ENCODE measurements at regions of chr9 and their contacts with region 1.

Region 1: DNA sequence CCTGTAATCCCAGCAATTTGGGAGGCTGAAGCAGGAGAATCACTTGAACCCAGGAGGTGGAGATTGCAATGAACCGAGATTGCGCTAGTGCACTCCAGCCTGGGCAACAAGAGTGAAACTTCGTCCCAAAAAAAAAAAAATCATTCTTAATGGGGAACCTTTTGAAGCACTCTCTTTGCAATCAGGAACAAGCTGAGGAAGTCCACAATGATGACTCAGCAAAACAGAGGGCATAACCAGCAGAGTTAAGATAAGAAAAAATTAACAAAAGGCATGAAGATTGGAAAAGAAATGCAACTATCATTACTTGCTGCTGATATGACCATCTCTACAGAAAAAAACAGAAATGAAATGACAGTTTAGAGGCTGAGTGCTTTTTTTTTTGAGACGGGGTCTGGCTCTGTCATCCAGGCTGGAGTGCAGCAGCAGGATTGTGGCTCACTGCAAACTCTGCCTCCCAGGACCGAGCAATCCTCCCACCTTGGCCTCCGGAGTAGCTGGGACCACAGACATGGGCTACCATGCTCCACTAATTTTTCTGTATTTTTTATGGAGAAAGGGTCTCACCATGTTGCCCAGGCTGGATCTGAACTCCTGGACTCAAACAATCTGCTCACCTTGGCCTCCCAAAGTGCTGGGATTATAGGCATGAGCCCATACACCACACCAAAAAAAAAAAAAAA is 88.0 kb downstream of the FNBP1 start:
- DNase-seq: no peak
- H3K4me3 ChIP-seq: no peak overlapping the region
- H3K4me3 Mint-ChIP-seq: peak overlapping the region in 7 of 8 donors; percentile 4 to 80 (median 36)
- H3K27ac ChIP-seq: no peak overlapping the region
- H3K27ac Mint-ChIP-seq: peak overlapping the region; percentile 34 to 87 (median 83)
- H3K4me1 ChIP-seq: peaks cover 33% of the 10 kb centered on the region
- H3K4me1 Mint-ChIP-seq: peaks cover 22 to 53% (median 33%) of the 10 kb centered on the region in 4 donors
- H3K27me3 ChIP-seq: no peaks in the 10 kb centered on the region
- H3K27me3 Mint-ChIP-seq: no peaks in the 10 kb centered on the region

Region 2: GRCh38 chr9:129802851-129803675 is 151.9 kb before region 1 on chr9 and contains the start of gene TOR1B:
- CTCF ChIA-PET with region 1: no interaction called
- POLR2A ChIA-PET with region 1: no interaction called
- intact Hi-C with region 1: no loop called
- DNase-seq: peak; percentile 93 to 96 (median 94)
- H3K4me3 ChIP-seq: peak within 1 kb of the TSS; percentile 77 to 78
- H3K4me3 Mint-ChIP-seq: peak within 1 kb of the TSS; percentile 91 to 96 (median 93)
- H3K27ac ChIP-seq: peak within 1 kb of the TSS; percentile 85
- H3K27ac Mint-ChIP-seq: peak within 1 kb of the TSS; percentile 88 to 97 (median 95)
- H3K4me1 ChIP-seq: peaks cover 27% of the 10 kb centered on the region
- H3K4me1 Mint-ChIP-seq: peaks cover 17 to 31% (median 23%) of the 10 kb centered on the region in 4 donors
- H3K27me3 ChIP-seq: no peaks in the 10 kb centered on the region
- H3K27me3 Mint-ChIP-seq: no peaks in the 10 kb centered on the region
- total RNA-seq, gene TOR1B: 29.5 to 33.0 TPM

Region 3: DNA sequence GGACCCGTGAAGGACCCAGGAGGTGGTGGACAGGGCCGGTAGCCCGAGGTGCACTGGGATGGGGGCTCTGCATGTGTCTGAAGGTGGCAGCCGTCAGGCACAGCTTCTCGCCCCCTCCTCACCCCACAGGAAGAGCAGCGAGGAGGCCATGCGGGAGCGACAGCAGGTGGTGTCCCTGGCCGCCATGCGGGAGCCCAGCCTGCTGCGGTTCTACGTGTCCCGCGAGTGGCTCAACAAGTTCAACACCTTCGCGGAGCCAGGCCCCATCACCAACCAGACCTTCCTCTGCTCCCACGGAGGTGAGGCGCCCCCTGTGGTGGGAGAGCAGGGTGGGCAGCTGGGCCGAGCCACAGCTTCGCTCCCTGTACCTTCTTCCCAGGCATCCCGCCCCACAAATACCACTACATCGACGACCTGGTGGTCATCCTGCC is 79.8 kb before region 1 on chr9:
- CTCF ChIA-PET with region 1: no interaction called
- POLR2A ChIA-PET with region 1: no interaction called
- intact Hi-C with region 1: no loop called
- DNase-seq: no peak
- H3K4me3 ChIP-seq: no peak overlapping the region
- H3K4me3 Mint-ChIP-seq: no peak overlapping the region
- H3K27ac ChIP-seq: peak overlapping the region; percentile 28
- H3K27ac Mint-ChIP-seq: peak overlapping the region in 1 of 7 donors; percentile 3
- H3K4me1 ChIP-seq: peaks cover 39% of the 10 kb centered on the region
- H3K4me1 Mint-ChIP-seq: peaks cover 15 to 61% (median 32%) of the 10 kb centered on the region in 4 donors
- H3K27me3 ChIP-seq: no peaks in the 10 kb centered on the region
- H3K27me3 Mint-ChIP-seq: no peaks in the 10 kb centered on the region

Region 4: GRCh38 chr9:129889941-129890717 is 64.9 kb before region 1 on chr9:
- CTCF ChIA-PET with region 1: interaction called, 4 read pairs
- POLR2A ChIA-PET with region 1: interaction called, 37 read pairs
- intact Hi-C with region 1: no loop called
- DNase-seq: peak; percentile 63 to 87 (median 71)
- H3K4me3 ChIP-seq: peak overlapping the region; percentile 12 to 42
- H3K4me3 Mint-ChIP-seq: peak overlapping the region; percentile 87 to 98 (median 94)
- H3K27ac ChIP-seq: peak overlapping the region; percentile 98
- H3K27ac Mint-ChIP-seq: peak overlapping the region; percentile 99 to 100 (median 100)
- H3K4me1 ChIP-seq: peaks cover 91% of the 10 kb centered on the region
- H3K4me1 Mint-ChIP-seq: peaks cover 50 to 98% (median 69%) of the 10 kb centered on the region in 4 donors
- H3K27me3 ChIP-seq: no peaks in the 10 kb centered on the region
- H3K27me3 Mint-ChIP-seq: no peaks in the 10 kb centered on the region

Region 5: DNA sequence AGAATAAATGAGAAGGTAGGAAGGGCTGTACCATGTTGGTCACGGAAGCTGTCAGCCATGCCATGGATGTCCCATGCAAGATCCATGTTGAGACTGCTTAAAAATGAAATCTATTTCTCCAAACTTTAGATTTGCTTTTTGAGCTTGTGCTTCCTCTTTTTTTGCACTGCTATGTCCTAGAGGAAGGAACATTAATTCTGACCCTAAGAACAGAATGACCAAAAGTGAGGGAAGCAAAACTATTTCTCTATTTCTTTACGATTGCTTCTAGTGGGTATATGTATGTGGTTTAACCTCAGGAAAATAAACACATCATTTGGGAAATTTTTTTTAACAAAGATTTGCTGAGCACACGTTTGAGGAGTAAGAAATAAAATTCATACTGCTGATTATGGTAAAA is 35.2 kb before region 1 on chr9:
- CTCF ChIA-PET with region 1: no interaction called
- POLR2A ChIA-PET with region 1: interaction called, 3 read pairs
- intact Hi-C with region 1: loop called (anchors 5 kb)
- DNase-seq: no peak
- H3K4me3 ChIP-seq: no peak overlapping the region
- H3K4me3 Mint-ChIP-seq: peak overlapping the region in 5 of 8 donors; percentile 50 to 75 (median 68)
- H3K27ac ChIP-seq: no peak overlapping the region
- H3K27ac Mint-ChIP-seq: peak overlapping the region; percentile 20 to 91 (median 66)
- H3K4me1 ChIP-seq: peaks cover 11% of the 10 kb centered on the region
- H3K4me1 Mint-ChIP-seq: peaks cover 22 to 65% (median 29%) of the 10 kb centered on the region in 4 donors
- H3K27me3 ChIP-seq: no peaks in the 10 kb centered on the region
- H3K27me3 Mint-ChIP-seq: no peaks in the 10 kb centered on the region

Region 6: DNA sequence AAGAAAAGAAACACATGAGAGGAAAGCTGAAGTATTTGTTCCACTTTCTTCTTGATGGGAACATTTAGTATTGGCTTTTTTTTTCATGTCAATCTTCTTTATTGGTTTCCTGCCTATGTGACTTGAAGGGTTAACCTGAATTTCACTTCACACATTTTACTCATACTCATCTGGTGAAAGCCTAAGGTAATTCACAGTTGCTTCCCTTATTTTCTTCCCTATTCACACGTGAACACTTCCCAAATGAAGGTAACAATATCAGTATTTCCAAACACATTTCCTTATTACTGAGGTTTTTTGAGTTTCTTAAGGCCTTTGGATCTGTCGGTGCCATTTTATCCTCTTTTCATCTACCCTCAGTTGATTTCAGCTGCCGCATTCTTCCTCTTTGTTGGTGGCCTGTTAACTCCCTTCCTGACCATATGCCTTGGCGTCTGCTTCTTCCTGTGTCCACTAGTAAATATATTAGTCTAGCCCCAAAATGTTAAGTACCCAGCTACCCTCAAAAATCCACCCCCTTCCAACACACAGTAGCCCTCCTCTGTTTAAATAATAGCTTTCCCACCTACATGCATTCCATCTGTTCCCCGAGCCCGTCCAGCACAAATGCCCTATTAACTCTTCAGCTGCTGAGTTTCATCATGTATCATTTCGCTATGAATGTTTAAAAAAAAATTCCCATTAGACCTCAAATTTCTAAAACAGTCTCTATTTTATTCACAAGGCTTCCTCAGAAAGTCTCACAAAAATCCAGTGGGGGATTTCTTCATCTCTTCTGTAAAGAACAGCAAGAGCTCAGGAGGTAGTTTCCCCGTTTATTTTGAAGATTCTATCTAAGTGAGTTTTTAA is 22.5 kb before region 1 on chr9:
- CTCF ChIA-PET with region 1: interaction called, 14 read pairs
- POLR2A ChIA-PET with region 1: interaction called, 8 read pairs
- intact Hi-C with region 1: no loop called
- DNase-seq: peak in 1 of 5 donors; percentile 15
- H3K4me3 ChIP-seq: peak overlapping the region in 1 of 2 donors; percentile 3
- H3K4me3 Mint-ChIP-seq: peak overlapping the region; percentile 71 to 86 (median 75)
- H3K27ac ChIP-seq: peak overlapping the region; percentile 66
- H3K27ac Mint-ChIP-seq: peak overlapping the region; percentile 89 to 96 (median 91)
- H3K4me1 ChIP-seq: peaks cover 59% of the 10 kb centered on the region
- H3K4me1 Mint-ChIP-seq: peaks cover 38 to 73% (median 56%) of the 10 kb centered on the region in 4 donors
- H3K27me3 ChIP-seq: no peaks in the 10 kb centered on the region
- H3K27me3 Mint-ChIP-seq: no peaks in the 10 kb centered on the region

Region 7: GRCh38 chr9:129944506-129945116 is 10.4 kb before region 1 on chr9:
- CTCF ChIA-PET with region 1: interaction called, 4 read pairs
- POLR2A ChIA-PET with region 1: interaction called, 46 read pairs
- intact Hi-C with region 1: no loop called
- DNase-seq: peak; percentile 70 to 83 (median 80)
- H3K4me3 ChIP-seq: no peak overlapping the region
- H3K4me3 Mint-ChIP-seq: peak overlapping the region; percentile 33 to 80 (median 52)
- H3K27ac ChIP-seq: peak overlapping the region; percentile 60
- H3K27ac Mint-ChIP-seq: peak overlapping the region; percentile 35 to 92 (median 85)
- H3K4me1 ChIP-seq: peaks cover 59% of the 10 kb centered on the region
- H3K4me1 Mint-ChIP-seq: peaks cover 35 to 70% (median 50%) of the 10 kb centered on the region in 4 donors
- H3K27me3 ChIP-seq: no peaks in the 10 kb centered on the region
- H3K27me3 Mint-ChIP-seq: no peaks in the 10 kb centered on the region

Region 8: GRCh38 chr9:130088051-130088450 is 133.0 kb after region 1 on chr9:
- CTCF ChIA-PET with region 1: no interaction called
- POLR2A ChIA-PET with region 1: no interaction called
- intact Hi-C with region 1: no loop called
- DNase-seq: no peak
- H3K4me3 ChIP-seq: no peak overlapping the region
- H3K4me3 Mint-ChIP-seq: no peak overlapping the region
- H3K27ac ChIP-seq: no peak overlapping the region
- H3K27ac Mint-ChIP-seq: peak overlapping the region in 4 of 7 donors; percentile 12 to 49 (median 32)
- H3K4me1 ChIP-seq: no peaks in the 10 kb centered on the region
- H3K4me1 Mint-ChIP-seq: peaks cover 0 to 3% (median 0%) of the 10 kb centered on the region in 4 donors
- H3K27me3 ChIP-seq: no peaks in the 10 kb centered on the region
- H3K27me3 Mint-ChIP-seq: no peaks in the 10 kb centered on the region

Measured in CD4-positive, alpha-beta memory T cell (primary cell).